ENCODE measurements at regions of chr2 and their contacts with region 1.

Region 1: DNA sequence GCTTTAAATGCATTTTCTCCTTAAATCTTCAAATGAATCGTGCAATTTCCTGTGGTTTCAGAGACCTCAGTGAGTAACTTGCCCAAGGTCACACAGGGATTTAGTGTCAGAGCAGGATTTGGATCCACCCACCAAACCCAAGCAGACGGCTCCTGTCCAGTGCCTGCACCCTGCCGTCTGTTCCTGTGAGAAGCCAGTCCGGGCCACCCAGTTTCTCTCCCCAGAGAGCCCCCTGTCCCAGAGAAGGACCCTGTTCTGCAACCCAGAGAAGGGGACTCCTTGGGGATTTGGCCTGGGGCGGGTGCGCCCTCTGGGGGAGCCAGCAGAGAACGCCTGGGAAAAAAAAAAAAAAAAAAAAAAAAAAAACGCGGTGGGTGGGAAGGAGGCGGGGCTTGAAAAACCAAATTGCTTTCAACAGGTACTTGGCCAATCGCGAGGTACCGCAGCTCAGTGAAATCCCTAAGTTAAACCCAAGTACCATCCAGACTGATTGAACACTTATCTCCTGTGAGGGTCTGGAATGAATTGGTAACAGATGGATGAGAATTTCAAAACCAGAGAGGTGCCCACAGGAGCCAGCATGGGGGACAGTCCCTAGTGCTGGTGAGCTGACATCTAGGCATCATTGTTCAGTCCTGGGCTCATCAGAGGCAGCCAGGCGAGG is 30.9 kb upstream of the REEP1 start:
- DNase-seq: peak in 4 of 5 donors; percentile 53 to 75 (median 64)
- H3K4me3 ChIP-seq: peak overlapping the region in 2 of 3 donors; percentile 20 to 32
- H3K27ac ChIP-seq: no peak overlapping the region
- H3K4me1 ChIP-seq: peaks cover 0 to 3% (median 0%) of the 10 kb centered on the region in 3 donors
- H3K27me3 ChIP-seq: no peaks in the 10 kb centered on the region
- CTCF ChIP-seq: peak; percentile 52

Region 2: GRCh38 chr2:86221066-86221684 is 147.1 kb before region 1 on chr2:
- intact Hi-C with region 1: loop called (anchors 10 kb)
- DNase-seq: peak in 3 of 5 donors; percentile 56 to 81 (median 66)
- H3K4me3 ChIP-seq: no peak overlapping the region
- H3K27ac ChIP-seq: no peak overlapping the region
- H3K4me1 ChIP-seq: no peaks in the 10 kb centered on the region
- H3K27me3 ChIP-seq: no peaks in the 10 kb centered on the region
- CTCF ChIP-seq: peak; percentile 86

Region 3: GRCh38 chr2:86476092-86476491 is 107.8 kb after region 1 on chr2:
- intact Hi-C with region 1: no loop called
- DNase-seq: no peak
- H3K4me3 ChIP-seq: no peak overlapping the region
- H3K27ac ChIP-seq: no peak overlapping the region
- H3K4me1 ChIP-seq: no peaks in the 10 kb centered on the region
- H3K27me3 ChIP-seq: no peaks in the 10 kb centered on the region
- CTCF ChIP-seq: no peak